Mammary epithelial cell (primary cell): ENCODE measurements at regions of chr21 and their contacts with region 1.

Region 1: DNA sequence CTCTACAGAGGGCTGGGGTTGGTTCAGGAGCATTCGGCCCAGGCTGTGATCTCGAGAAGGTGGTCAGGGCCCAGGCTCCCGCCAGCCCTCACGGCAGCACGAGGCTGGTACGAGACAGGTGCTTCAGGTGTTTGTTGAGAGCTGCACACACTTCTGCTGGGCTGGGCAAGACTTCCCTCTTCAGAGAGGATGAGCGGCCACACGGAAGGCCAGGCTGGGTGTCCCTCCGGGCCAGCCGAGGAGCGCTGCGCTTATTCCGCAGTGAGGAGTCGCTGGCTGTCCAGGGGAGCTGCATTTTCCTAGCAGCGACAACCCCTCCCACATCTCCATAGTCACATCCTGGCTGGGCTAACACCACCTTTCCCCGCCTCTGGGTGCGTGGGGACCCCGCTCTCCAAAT is 50.5 kb downstream of the PDE9A start:
- DNase-seq: no peak
- H3K4me3 ChIP-seq: no peak overlapping the region
- H3K27ac ChIP-seq: no peak overlapping the region
- H3K4me1 ChIP-seq: no peaks in the 10 kb centered on the region
- H3K27me3 ChIP-seq: no peaks in the 10 kb centered on the region
- CTCF ChIP-seq: no peak

Region 2: DNA sequence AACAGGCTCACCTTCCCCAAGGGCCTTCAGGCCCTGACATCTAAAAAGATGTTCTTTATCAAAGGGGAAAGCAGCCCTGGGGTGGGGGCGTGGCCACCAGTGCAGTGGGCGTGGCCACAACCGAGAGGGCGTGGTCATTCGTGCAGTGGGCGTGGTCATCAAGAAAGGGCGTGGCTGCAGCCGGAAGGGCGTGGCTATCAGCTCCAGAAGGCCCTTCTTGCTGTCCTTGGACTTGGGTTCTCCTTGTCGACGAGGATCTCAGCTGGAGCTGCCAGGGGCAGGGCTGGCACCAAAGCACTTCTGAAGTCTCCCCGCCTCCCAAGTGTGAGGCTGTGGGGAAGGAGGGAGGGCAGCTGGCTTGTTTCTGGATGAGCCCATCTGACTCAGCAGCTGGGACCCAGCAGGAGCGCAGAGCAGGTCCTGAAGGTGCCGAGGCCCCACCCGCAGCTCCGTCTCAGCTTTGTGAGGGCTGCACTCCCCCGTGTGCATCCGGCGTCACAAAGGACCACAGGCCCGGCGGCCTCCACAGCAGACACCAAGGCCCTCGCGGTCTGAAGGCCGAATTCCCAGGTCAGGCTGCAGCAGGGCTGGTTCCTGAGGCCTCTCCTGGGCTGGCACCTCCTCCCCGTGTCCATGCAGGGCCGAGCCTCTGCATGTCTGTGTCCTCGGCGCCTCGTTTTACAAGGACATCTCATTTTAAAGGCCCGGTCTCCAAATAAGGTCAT is 37.8 kb before region 1 on chr21:
- CTCF ChIA-PET with region 1: no interaction called
- dilution Hi-C with region 1: no loop called
- in situ Hi-C with region 1: no loop called
- intact Hi-C with region 1: no loop called
- DNase-seq: no peak
- H3K4me3 ChIP-seq: no peak overlapping the region
- H3K27ac ChIP-seq: no peak overlapping the region
- H3K4me1 ChIP-seq: no peaks in the 10 kb centered on the region
- H3K27me3 ChIP-seq: no peaks in the 10 kb centered on the region
- CTCF ChIP-seq: no peak

Region 3: GRCh38 chr21:42744520-42745445 is 40.8 kb after region 1 on chr21:
- CTCF ChIA-PET with region 1: no interaction called
- dilution Hi-C with region 1: loop called (anchors 5 kb)
- in situ Hi-C with region 1: no loop called
- intact Hi-C with region 1: no loop called
- DNase-seq: no peak
- H3K4me3 ChIP-seq: no peak overlapping the region
- H3K27ac ChIP-seq: no peak overlapping the region
- H3K4me1 ChIP-seq: no peaks in the 10 kb centered on the region
- H3K27me3 ChIP-seq: no peaks in the 10 kb centered on the region
- CTCF ChIP-seq: no peak

Region 4: DNA sequence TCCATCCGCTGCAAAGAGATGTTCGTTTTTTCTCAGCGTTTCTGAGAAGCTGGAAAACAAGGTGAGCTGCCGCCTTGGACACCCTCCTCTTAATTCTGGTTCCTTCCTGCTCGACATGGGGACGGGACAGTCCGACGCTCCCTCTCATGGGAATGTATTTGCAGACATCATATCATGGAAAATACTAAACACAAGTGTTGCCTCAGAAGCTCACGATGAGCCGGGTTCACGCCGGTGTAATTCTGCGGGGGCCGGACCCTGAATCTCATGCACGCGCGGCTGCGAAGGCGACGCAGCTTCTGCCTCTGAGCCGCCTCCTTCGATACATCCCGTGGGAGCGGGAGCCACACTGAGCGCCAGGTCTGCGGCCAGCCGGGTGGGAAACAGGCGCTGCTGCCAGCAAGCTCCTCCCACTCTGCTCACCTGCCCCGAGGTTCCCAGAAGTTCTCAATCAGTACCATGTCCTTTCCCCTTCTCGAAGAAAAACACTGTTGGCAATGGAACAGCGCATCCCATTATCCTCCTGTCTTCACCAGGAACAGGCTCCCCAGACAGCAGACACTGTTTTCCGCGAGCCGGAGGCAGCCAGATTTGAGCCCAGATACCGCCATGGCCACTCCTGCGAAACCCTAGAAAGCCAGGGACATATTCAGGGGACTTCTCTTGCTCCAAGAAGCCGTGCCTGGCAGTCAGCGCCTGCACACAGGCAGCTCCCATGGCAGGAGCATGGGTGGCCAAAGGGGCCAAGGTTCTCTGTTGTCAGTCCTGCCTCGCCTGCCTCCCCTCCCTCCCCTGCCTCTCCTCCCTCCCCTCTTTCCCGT is 77.4 kb after region 1 on chr21:
- CTCF ChIA-PET with region 1: no interaction called
- dilution Hi-C with region 1: no loop called
- in situ Hi-C with region 1: no loop called
- intact Hi-C with region 1: no loop called
- DNase-seq: peak; percentile 27
- H3K4me3 ChIP-seq: peak overlapping the region in 2 of 3 experiments; percentile 28 to 33
- H3K27ac ChIP-seq: no peak overlapping the region
- H3K4me1 ChIP-seq: peaks cover 7% of the 10 kb centered on the region
- H3K27me3 ChIP-seq: peaks cover 11% of the 10 kb centered on the region
- CTCF ChIP-seq: peak in 1 of 2 donors; percentile 9